Caco-2 (cell line): ENCODE measurements at regions of chr1 and their contacts with region 1.

Region 1: GRCh38 chr1:45499415-45499769 is 481 bp downstream of the CCDC163 start:
- DNase-seq: no peak
- H3K4me3 ChIP-seq: peak overlapping the region; percentile 55
- H3K4me3 Mint-ChIP-seq: peak overlapping the region; percentile 90
- H3K27ac Mint-ChIP-seq: peak overlapping the region; percentile 89
- H3K4me1 ChIP-seq: peaks cover 11% of the 10 kb centered on the region; the same call in 1 of the 2 replicates
- H3K4me1 Mint-ChIP-seq: peaks cover 32% of the 10 kb centered on the region
- H3K27me3 ChIP-seq: no peaks in the 10 kb centered on the region
- H3K27me3 Mint-ChIP-seq: no peaks in the 10 kb centered on the region
- CTCF ChIP-seq: no peak

Region 2: GRCh38 chr1:45002650-45003645 is 496.4 kb before region 1 on chr1:
- CTCF ChIA-PET with region 1: no interaction called
- POLR2A ChIA-PET with region 1: no interaction called
- intact Hi-C with region 1: no loop called
- DNase-seq: peak in 1 of 2 experiments; percentile 14
- H3K4me3 ChIP-seq: no peak overlapping the region
- H3K4me3 Mint-ChIP-seq: no peak overlapping the region
- H3K27ac Mint-ChIP-seq: no peak overlapping the region
- H3K4me1 ChIP-seq: no peaks in the 10 kb centered on the region
- H3K4me1 Mint-ChIP-seq: peaks cover 11% of the 10 kb centered on the region
- H3K27me3 ChIP-seq: no peaks in the 10 kb centered on the region
- H3K27me3 Mint-ChIP-seq: no peaks in the 10 kb centered on the region
- CTCF ChIP-seq: no peak

Region 3: DNA sequence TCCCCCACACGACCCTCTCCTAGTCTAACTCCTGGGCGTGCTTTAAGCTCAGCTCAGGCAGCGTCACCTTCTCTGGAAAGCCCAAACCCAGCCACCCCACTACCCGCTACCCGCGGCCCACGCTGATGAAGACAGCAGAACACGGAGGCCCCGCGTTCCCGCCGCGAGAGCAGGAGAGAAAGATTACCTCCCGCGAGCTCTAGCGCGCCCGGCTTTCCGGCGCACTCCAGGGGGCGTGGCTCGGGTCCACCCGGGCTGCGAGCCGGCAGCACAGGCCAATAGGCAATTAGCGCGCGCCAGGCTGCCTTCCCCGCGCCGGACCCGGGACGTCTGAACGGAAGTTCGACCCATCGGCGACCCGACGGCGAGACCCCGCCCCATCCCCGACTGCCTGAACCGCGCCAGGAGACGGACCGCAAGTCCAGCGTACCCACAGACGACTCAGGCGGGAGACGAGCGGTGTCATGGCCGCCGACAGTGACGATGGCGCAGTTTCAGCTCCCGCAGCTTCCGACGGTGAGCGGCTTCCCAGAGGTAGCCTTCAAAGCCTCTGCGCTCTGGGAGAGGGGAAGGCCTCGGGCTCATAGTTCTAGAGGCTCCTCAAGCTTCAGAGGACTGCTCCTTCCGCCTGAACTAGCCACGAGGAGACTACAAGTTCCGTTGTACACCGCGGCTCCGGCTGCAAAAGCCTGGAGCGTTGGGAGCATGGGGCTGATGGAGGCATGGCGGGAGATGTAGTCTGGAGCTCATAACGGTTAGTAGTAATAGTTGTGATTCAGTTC is 159.4 kb before region 1 on chr1 and contains the starts of genes MUTYH and TOE1:
- CTCF ChIA-PET with region 1: interaction called, 6 read pairs
- POLR2A ChIA-PET with region 1: interaction called, 10 read pairs
- intact Hi-C with region 1: no loop called
- DNase-seq: peak; percentile 96
- H3K4me3 ChIP-seq: peak within 1 kb of the TSS; percentile 67
- H3K4me3 Mint-ChIP-seq: peak within 1 kb of the TSS; percentile 99
- H3K27ac Mint-ChIP-seq: peak within 1 kb of the TSS; percentile 99
- H3K4me1 ChIP-seq: peaks cover 39% of the 10 kb centered on the region
- H3K4me1 Mint-ChIP-seq: peaks cover 43% of the 10 kb centered on the region
- H3K27me3 ChIP-seq: no peaks in the 10 kb centered on the region
- H3K27me3 Mint-ChIP-seq: no peaks in the 10 kb centered on the region
- CTCF ChIP-seq: no peak
- total RNA-seq, gene MUTYH: 46.3 and 48.4 TPM in 2 replicates
- total RNA-seq, gene TOE1: 15.5 and 19.0 TPM in 2 replicates

Region 4: GRCh38 chr1:45550401-45551351 is 51.3 kb after region 1 on chr1 and contains the start of gene AKR1A1:
- CTCF ChIA-PET with region 1: interaction called, 3 read pairs
- POLR2A ChIA-PET with region 1: interaction called, 10 read pairs
- intact Hi-C with region 1: no loop called
- DNase-seq: peak; percentile 91 to 93
- H3K4me3 ChIP-seq: peak within 1 kb of the TSS; percentile 81
- H3K4me3 Mint-ChIP-seq: peak within 1 kb of the TSS; percentile 95
- H3K27ac Mint-ChIP-seq: peak within 1 kb of the TSS; percentile 90
- H3K4me1 ChIP-seq: 0 out of 2 replicates have a peak, but pooled peaks cover 4% of the 10 kb centered on the region
- H3K4me1 Mint-ChIP-seq: peaks cover 7% of the 10 kb centered on the region
- H3K27me3 ChIP-seq: no peaks in the 10 kb centered on the region
- H3K27me3 Mint-ChIP-seq: no peaks in the 10 kb centered on the region
- CTCF ChIP-seq: peak in 1 of 2 experiments; percentile 3
- total RNA-seq, gene AKR1A1: 119 and 129 TPM in 2 replicates